Left cardiac atrium (tissue), 4 donors: ENCODE measurements at regions of chr1 and their contacts with region 1.

Region 1: DNA sequence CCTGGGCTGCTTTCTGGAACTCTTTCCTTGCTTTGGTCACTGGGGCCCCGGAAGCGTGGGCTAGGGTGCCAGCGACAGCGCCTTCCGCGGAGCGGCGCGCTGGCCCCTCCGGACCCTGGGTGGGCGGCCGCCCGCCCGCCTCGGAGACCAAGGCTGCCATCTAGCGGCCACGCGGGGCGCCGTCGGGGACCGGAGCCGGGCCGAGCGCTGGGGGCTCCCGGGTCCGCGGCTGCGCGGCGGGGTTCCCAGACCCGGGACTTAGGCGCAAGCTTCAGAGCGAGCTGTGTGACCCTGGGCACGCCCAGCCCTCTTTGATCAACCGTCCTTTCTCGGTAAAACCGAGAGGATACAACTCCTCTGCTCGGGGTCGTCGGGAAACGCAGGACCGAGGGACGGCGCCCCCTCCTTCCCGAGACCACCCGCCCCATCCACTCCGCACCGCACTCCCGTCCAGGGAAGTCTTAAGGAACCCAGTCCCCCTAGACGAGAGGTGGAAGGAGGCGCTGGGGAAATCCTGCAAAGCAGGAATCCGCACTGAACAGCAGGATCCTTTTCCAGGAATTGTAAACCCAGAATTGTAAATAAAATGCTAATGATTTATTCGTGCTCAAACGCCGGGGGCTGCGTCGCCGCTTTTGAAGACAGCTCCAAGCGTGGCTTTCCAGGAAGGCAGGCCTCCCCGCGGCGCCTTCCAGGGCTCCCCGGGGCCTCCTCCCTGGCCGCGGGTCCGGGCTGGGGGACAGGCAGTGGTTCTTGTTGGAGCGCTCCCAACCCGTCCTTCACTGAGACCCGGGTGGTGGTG is 41.2 kb downstream of the RRAGC start:
- DNase-seq: peak; percentile 45
- ATAC-seq: peak; percentile 78 to 83

Region 2: DNA sequence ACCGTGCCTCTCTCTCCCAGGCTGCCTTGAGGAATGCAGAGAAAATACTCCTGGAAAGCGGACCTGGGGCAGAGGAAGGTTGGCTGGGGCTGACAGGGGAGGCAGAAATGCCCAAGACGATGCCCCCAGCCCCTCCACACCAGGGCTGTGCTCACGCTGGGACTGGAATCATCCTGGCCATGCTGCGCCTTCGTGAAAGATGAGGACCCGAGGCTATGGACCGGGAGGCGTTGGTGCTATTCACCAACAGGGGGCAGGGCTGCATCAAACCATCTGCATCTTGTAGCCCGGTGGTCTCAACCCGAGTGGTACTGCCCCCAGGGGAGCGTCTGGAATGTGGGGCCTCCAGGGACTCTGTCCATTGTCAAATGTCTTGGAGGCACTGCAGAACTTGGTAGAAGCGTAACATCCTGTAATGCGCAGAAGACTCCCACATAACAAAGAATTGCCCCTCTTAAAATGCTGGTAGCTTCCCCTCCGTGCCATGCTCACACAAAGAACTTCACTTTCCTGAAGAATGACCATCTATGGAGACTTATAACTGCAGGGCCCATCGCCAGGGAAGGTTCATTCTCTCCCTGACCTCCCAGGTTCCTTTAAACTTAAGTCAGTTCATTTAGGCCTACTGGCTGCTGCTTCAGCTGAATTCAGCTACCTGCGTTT is 210.0 kb before region 1 on chr1:
- intact Hi-C with region 1: loop called (anchors 5 kb)
- DNase-seq: no peak
- ATAC-seq: peak in 1 of 2 donors; percentile 26

Region 3: GRCh38 chr1:38613996-38614395 is 204.4 kb before region 1 on chr1:
- intact Hi-C with region 1: loop called (anchors 5 kb)
- DNase-seq: no peak
- ATAC-seq: peak; percentile 23 to 45

Region 4: DNA sequence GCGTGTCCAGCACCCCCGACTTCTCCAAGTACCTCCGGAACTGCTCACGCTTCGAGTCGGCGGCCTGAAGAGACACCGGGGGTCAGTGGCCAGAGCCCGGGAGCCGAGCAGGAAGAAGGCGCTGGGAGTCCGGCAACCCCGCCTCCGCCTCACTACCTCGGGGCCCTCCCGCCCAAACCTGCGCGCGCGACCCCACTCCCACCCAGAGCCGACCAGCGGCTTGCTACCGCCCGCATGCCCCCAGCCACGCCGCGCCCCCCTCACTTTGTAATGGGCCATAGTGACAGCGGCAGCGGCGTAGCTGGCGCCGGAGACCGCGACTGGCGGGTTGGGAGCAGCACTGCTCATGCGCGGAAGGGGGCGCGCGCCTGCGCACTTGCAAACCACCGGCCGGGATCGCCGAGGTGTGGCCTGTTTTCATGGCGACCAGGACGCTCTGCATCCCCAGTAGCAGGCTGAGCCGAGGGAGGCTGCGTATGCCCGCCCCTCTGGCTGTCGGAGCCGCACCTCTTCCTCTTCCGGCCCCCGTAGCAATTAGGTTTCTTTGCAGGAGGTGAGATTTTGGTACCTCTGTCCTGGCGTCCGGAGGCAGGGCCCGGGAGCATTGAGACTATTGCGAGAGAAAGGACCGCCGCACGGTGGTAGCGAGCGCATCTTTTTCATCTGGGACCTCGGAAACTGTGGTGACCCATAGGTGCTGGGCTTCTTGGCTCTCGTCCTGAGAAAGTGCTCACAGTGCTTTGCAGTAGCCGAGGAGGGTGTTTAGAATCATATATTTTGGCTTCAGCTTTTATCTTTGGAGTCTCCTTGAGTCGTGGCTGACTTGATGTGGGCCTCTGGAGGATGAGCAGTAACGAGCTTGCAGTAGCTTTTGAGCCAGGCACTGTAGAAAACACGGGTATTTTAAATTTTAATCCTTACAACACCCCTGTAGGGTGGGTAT is 54.9 kb after region 1 on chr1 and contains the start of gene MYCBP:
- intact Hi-C with region 1: no loop called
- DNase-seq: peak; percentile 96
- ATAC-seq: peak; percentile 99 to 100
- total RNA-seq, gene MYCBP: 11.5 to 14.8 TPM